ENCODE measurements at regions of chr7 and their contacts with region 1.

Region 1: DNA sequence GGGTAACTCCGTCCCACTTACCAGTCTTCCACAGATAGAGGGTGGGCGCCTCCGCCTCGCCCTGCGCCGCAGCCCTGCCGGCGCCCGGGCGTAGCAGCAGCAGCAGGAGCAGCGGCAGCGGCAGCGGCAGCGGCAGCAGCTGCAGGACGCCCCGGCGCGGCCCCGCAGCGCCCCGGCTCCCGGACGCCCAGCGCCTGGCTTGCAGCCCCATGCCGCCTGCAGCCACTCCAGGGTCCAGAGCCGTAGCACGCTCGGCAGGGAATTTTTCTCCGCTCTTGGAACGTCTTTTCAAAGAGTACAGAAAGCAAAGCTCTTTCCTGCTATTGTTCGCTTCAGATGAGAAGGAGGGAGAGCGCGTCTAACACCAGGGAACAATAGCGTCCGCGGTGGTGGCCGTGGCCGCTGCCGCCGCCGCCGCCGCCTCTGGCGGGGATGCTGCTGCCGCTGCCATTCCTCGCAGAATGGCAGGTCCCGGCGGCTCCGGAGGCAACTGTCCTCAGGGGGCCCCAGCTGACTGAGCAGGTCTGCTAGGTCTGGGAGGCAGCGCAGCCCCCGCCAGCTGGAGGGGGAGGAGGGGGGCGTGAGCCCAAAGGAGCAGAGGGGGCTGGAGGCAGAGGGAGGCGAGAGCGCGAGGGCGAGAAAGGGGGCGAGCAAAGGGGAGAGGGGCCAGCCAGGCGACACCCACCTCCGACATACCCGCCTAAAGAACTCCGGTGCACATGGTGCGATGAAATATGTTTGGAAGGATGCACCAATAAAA is at the start of gene THSD7A:
- DNase-seq: peak; percentile 23 to 48
- ATAC-seq: peak; percentile 83 to 94 (median 88)
- H3K4me3 ChIP-seq: peak within 1 kb of the TSS; percentile 30 to 75 (median 62)
- H3K27ac ChIP-seq: peak within 1 kb of the TSS; percentile 0 to 72 (median 56)
- H3K4me1 ChIP-seq: peaks cover 0 to 25% (median 13%) of the 10 kb centered on the region in 9 donors
- H3K27me3 ChIP-seq: peaks cover 0 to 23% (median 0%) of the 10 kb centered on the region in 7 donors
- CTCF ChIP-seq: peak in 4 of 9 donors; percentile 4 to 33 (median 12)
- total RNA-seq, gene THSD7A: 0.67 to 3.4 (median 1.7) TPM

Region 2: GRCh38 chr7:11427686-11428273 is 404.1 kb before region 1 on chr7:
- intact Hi-C with region 1: loop called in 4 of 10 experiments (anchors 5 to 10 kb)
- DNase-seq: peak in 1 of 2 donors; percentile 29
- ATAC-seq: peak in 1 of 8 donors; percentile 42
- H3K4me3 ChIP-seq: no peak overlapping the region
- H3K27ac ChIP-seq: no peak overlapping the region
- H3K4me1 ChIP-seq: peaks cover 0 to 8% (median 0%) of the 10 kb centered on the region in 9 donors
- H3K27me3 ChIP-seq: no peaks in the 10 kb centered on the region
- CTCF ChIP-seq: peak; percentile 41 to 89 (median 75)

Region 3: DNA sequence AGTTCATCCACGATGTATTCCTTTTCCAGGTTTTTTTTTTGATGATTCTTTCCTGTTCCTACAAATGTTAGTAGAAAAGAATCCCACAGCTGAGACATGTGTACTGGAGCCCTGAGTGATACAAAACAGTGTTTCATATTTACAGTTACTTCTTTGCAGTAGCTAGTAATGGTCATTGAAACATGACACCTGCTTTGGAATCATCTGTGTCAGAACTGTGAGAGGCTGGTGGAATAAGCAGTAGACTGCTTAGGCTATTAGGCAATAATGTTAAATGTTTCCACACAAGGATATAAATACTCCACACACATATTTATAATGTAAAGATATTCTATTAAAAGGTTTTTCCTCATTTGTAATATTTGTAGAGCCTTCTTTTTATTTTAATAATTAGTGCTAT is 393.9 kb before region 1 on chr7:
- intact Hi-C with region 1: loop called in 1 of 10 experiments (anchors 10 kb)
- DNase-seq: no peak
- ATAC-seq: no peak
- H3K4me3 ChIP-seq: no peak overlapping the region
- H3K27ac ChIP-seq: no peak overlapping the region
- H3K4me1 ChIP-seq: no peaks in the 10 kb centered on the region
- H3K27me3 ChIP-seq: no peaks in the 10 kb centered on the region
- CTCF ChIP-seq: no peak